Activated CD4-positive, alpha-beta T cell treated with anti-CD3 and anti-CD28 coated beads, Interleukin-2, amount 10 ng/mL, durations not matched to agents 24 days and 14 days (primary cell): ENCODE measurements at regions of chr7 and their contacts with region 1.

Region 1: DNA sequence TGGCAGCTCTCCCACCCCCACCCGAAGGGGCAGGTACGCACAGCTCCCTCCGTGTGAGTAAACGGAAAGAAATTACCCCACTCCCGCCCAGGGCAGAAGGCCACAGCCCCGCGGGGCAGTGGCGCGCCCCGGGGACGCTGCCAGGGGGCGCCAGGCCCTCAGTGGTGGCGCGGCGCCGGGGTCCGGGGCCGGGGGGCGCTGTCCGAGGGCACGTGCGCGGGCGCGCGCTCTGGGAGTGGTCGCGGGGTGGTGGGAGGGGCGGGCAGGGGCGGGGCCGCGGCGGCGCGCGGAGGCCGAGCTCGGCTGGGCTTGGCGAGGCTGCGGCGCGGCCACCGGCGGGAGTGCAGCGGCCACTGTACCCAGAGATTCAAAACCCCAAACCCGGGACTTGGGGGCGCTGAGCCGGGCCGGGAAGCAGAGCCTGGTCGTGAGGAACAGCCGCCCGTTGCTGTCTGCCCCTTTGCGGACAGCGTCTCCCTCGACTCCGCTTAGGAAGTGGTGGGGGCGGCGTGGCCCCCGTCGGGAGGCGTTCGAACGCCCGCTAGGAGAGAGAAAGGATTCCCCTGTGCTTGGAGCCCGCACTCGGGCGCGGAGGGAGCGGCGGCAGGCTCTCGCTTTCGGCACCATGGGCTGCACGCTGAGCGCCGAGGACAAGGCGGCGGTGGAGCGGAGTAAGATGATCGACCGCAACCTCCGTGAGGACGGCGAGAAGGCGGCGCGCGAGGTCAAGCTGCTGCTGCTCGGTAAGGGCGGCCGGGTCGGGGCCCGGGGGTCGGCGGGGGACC is at the start of gene GNAI1:
- DNase-seq: peak; percentile 74
- H3K4me3 Mint-ChIP-seq: peak within 1 kb of the TSS; percentile 86
- H3K27ac Mint-ChIP-seq: peak within 1 kb of the TSS; percentile 83
- H3K4me1 Mint-ChIP-seq: peaks cover 27% of the 10 kb centered on the region
- H3K27me3 Mint-ChIP-seq: peaks cover 59% of the 10 kb centered on the region
- total RNA-seq, gene GNAI1: 5.7 and 6.8 TPM in 2 replicates

Region 2: DNA sequence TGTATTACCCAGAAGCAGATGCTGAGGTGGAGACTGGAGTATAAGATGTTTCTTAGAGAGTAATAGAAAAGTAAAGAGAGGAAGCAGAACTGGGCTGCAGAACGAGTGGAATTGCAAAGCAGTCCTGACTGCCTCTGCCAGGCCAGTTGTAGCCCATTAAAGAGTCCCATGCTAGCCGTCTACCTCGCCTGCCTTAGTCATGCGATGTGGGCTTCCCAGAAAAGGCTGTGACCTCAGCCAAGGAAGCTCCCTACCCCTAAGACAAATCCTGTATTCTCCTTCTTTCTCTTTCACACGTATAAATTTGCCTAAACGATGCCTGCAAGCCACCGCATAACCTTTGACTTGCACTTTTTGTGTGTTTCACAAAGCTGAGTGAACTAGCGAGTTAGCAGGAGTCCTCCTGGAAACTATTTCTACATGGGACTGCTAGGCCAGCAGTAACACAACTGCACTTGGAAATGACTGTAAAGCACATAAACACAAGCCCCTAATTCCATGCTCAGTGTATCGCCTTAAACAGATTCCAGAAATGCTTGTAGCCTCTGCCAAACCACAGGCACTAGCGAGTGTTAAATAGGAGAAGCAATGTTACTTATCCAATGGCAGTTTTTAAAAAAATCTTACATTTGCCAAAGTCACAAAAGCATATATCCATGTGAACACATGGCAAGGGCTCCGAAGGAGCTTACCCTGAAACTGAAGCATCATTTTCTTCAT is 47.5 kb before region 1 on chr7:
- intact Hi-C with region 1: no loop called
- DNase-seq: no peak
- H3K4me3 Mint-ChIP-seq: no peak overlapping the region
- H3K27ac Mint-ChIP-seq: no peak overlapping the region
- H3K4me1 Mint-ChIP-seq: no peaks in the 10 kb centered on the region
- H3K27me3 Mint-ChIP-seq: peaks cover 3% of the 10 kb centered on the region

Region 3: DNA sequence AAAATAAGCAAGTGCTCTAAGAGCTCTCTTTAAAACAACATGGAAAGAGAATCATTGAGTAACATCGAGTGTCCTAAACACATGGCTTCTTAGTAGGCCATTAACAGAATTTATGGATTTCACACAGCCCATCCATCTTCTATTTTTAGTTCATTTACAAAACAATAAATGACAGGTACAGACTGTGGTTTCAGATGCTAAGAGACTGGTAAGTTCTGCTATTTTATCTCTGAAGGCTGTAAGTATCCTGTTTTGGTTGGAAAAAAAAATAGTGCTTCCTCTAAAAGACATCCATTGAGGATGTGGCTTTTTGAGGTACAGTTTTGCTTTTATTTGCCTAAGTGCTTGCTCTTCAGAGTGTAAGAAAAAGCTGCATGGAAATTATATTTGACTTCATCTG is 27.4 kb before region 1 on chr7:
- intact Hi-C with region 1: loop called (anchors 2 kb)
- DNase-seq: no peak
- H3K4me3 Mint-ChIP-seq: peak overlapping the region; percentile 28
- H3K27ac Mint-ChIP-seq: no peak overlapping the region
- H3K4me1 Mint-ChIP-seq: peaks cover 21% of the 10 kb centered on the region
- H3K27me3 Mint-ChIP-seq: no peaks in the 10 kb centered on the region

Region 4: DNA sequence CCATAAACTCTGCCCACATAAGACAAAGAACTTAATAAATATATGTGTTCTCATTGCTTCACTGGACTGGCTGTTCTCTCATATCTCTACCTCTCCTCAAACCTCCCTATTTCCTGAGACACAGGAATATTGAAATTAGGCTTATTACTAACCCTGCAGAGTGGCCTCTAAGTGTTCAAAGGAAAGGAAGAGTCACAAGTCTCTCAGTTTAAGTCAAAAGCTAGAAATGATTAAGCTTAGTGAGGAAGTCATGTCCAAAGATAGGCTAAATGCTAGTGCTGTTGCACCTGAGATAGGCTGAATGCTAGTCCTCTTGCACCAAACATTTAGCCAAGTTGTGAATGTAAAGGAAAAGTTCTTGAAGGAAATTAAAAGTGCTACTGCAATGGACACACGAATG is 41.0 kb after region 1 on chr7:
- intact Hi-C with region 1: loop called (anchors 1 kb)
- DNase-seq: no peak
- H3K4me3 Mint-ChIP-seq: no peak overlapping the region
- H3K27ac Mint-ChIP-seq: peak overlapping the region; percentile 41
- H3K4me1 Mint-ChIP-seq: peaks cover 13% of the 10 kb centered on the region
- H3K27me3 Mint-ChIP-seq: no peaks in the 10 kb centered on the region

Region 5: GRCh38 chr7:80231707-80232106 is 97.0 kb after region 1 on chr7:
- intact Hi-C with region 1: loop called (anchors 5 kb)
- DNase-seq: no peak
- H3K4me3 Mint-ChIP-seq: no peak overlapping the region
- H3K27ac Mint-ChIP-seq: no peak overlapping the region
- H3K4me1 Mint-ChIP-seq: no peaks in the 10 kb centered on the region
- H3K27me3 Mint-ChIP-seq: peaks cover 8% of the 10 kb centered on the region

Region 6: GRCh38 chr7:80257756-80258155 is 123.0 kb after region 1 on chr7:
- intact Hi-C with region 1: no loop called
- DNase-seq: no peak
- H3K4me3 Mint-ChIP-seq: no peak overlapping the region
- H3K27ac Mint-ChIP-seq: no peak overlapping the region
- H3K4me1 Mint-ChIP-seq: no peaks in the 10 kb centered on the region
- H3K27me3 Mint-ChIP-seq: peaks cover 5% of the 10 kb centered on the region